ENCODE measurements at regions of chr11 and their contacts with region 1.

Region 1: DNA sequence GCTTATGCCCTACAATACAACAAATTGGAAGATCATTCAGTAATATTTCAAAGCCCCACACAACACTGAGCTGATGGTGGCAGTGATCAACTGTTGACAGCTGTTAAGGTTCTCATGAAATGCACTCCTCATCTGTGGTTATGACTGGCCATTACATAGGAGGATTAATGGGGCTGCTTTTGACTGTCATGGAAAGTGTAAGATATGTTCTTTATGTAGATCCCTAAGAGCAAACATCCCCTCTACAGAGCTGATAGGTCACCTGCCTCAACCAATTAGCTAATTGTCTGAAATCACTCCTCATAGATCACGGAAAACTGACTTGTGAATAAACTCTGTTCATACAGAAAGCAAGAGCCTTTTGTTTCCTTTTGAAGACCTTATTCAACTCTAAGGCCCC is 78.1 kb downstream of the GAB2 start:
- DNase-seq: no peak
- ATAC-seq: peak; percentile 75
- H3K4me3 Mint-ChIP-seq: no peak overlapping the region
- H3K27ac Mint-ChIP-seq: peak overlapping the region; percentile 77
- H3K4me1 Mint-ChIP-seq: peaks cover 34% of the 10 kb centered on the region
- H3K27me3 Mint-ChIP-seq: peaks cover 4% of the 10 kb centered on the region

Region 2: DNA sequence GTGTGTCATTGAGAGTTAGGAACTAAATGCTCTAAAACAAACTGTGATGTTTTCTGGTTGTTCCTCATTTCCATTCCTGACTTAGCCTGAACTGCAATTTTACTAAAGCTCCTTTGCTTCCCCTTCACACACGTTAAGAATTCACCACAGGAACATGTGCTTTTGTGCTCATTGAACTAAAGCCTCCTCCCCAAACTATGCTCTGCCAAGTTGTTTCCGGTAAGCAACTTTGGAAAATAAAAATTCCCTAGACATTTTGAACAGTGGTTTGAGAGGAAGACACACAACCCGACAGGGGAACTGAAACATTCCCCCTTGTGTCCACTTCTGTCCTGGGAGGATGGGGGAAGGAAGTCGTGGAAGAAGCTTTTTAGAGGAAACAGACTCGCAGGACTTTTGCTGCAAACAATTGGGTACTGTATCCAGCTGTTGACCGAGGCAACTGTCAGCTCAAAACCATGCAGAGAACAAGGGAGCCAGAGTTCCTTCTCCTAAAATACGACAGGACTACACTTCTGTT is 11.2 kb after region 1 on chr11:
- CTCF ChIA-PET with region 1: interaction called, 10 read pairs
- POLR2A ChIA-PET with region 1: no interaction called
- DNase-seq: no peak
- ATAC-seq: no peak
- H3K4me3 Mint-ChIP-seq: no peak overlapping the region
- H3K27ac Mint-ChIP-seq: peak overlapping the region; percentile 87
- H3K4me1 Mint-ChIP-seq: peaks cover 37% of the 10 kb centered on the region
- H3K27me3 Mint-ChIP-seq: peaks cover 3% of the 10 kb centered on the region

Measured in activated CD8-positive, alpha-beta T cell treated with anti-CD3 and anti-CD28 coated beads, Interleukin-2, amount 10 ng/mL, durations not matched to agents 7 days and 5 days (primary cell).